Right cardiac atrium (tissue), 5 donors: ENCODE measurements at regions of chr2 and their contacts with region 1.

Region 1: GRCh38 chr2:177332041-177332991 is 60.3 kb upstream of the AGPS start:
- DNase-seq: peak; percentile 50 to 72 (median 71)
- ATAC-seq: peak; percentile 81 to 87
- H3K4me3 ChIP-seq: peak overlapping the region; percentile 14
- H3K27ac ChIP-seq: no peak overlapping the region
- H3K4me1 ChIP-seq: no peaks in the 10 kb centered on the region
- H3K27me3 ChIP-seq: no peaks in the 10 kb centered on the region

Region 2: DNA sequence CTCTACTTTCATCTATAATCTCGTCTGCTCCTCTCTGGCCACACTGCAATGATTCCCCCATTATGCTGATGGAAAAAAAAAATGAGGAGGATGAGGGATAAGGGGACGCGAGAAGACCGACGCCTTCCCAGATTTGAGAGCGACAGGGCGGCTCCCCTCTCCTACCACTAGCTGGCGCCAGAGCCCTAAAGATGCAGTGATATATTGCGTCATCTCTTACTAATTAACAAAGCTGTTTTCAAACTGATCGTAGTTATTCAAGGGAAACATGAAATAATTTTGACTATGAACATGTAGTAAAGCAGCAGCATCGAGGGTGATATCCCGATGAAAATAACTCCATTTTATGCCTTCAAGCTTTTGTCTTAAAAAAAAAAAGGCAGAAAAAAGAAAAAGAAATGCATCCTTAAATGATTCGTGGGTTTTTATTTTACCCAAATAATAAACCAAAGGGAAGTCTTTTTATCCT is 167.7 kb before region 1 on chr2:
- intact Hi-C with region 1: loop called (anchors 2 to 5 kb)
- DNase-seq: peak; percentile 82 to 94 (median 91)
- ATAC-seq: peak; percentile 88 to 92
- H3K4me3 ChIP-seq: peak overlapping the region; percentile 66
- H3K27ac ChIP-seq: no peak overlapping the region
- H3K4me1 ChIP-seq: no peaks in the 10 kb centered on the region
- H3K27me3 ChIP-seq: no peaks in the 10 kb centered on the region

Region 3: DNA sequence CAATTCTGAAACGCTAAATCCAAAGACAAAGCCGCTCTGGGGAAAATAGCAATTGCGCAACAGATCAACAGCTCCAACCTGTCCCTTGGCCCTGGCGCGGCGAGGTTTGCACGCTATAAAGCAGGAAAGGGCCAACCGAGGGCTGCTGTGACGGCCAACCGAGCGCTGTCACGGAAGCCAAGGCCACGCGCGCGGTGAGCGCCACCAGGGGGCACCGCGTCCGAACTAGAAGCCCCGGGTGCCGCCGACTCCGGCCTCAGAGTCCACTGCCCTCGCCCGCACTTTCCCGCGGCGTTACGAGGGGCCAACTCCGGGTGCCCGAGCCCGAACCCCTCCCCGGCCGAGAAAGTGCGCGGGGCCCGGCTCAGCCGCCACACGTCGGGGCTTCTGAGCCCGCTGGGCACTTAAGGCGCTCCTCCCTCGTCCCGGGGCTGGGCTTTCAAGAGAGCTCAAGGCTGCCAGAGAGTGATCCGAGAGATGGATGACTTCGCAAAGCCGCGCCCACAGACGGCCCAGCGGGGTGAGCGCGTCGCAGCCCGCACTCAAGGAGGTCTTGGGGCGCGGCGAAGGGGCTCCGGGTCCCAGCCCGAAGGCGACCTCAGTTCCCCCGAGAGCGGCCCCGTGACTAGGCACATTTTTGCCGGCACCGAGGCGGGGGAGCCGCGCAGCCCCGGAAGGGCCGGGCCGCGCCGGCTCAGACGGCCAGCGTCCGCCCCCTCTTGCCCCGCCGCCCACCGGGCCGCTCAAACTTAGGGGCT is 68.7 kb before region 1 on chr2:
- intact Hi-C with region 1: loop called in 3 of 4 experiments (anchors 5 to 10 kb)
- DNase-seq: peak; percentile 98 to 100 (median 99)
- ATAC-seq: peak; percentile 83 to 85
- H3K4me3 ChIP-seq: peak overlapping the region; percentile 90
- H3K27ac ChIP-seq: peak overlapping the region; percentile 100
- H3K4me1 ChIP-seq: no peaks in the 10 kb centered on the region
- H3K27me3 ChIP-seq: no peaks in the 10 kb centered on the region

Region 4: DNA sequence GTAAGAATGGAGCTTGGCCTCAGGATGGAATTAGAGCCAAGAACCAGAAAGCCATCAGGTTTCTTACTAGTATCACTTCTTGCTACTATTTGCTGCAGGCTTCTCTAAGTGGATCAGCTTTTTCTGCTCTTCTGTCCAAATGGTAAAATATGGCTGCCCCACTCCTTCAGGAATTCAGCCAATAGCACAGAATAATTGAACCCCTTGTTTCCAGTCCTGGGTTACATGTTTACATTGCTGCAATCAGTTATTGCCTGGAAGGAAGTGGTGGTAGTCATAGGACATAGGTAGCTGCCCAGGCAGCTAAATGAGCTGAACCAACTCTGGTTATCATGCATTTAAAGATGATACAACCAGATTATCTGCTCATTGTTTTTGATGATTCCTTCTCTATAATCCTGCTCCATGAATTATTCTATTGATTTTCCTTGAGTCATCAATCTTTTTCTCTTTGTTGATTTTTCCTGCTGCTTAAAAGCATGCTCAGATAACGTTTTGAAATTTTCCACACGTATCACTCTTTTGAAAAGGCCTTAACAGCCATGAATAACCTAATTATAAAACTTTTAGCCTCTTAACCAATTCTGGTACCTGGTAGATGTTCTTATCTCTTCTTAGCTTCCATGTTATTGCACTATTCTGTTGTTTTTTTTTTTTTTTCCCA is 72.8 kb after region 1 on chr2:
- intact Hi-C with region 1: loop called in 1 of 4 experiments (anchors 5 kb)
- DNase-seq: no peak
- ATAC-seq: no peak
- H3K4me3 ChIP-seq: no peak overlapping the region
- H3K27ac ChIP-seq: no peak overlapping the region
- H3K4me1 ChIP-seq: no peaks in the 10 kb centered on the region
- H3K27me3 ChIP-seq: no peaks in the 10 kb centered on the region

Region 5: DNA sequence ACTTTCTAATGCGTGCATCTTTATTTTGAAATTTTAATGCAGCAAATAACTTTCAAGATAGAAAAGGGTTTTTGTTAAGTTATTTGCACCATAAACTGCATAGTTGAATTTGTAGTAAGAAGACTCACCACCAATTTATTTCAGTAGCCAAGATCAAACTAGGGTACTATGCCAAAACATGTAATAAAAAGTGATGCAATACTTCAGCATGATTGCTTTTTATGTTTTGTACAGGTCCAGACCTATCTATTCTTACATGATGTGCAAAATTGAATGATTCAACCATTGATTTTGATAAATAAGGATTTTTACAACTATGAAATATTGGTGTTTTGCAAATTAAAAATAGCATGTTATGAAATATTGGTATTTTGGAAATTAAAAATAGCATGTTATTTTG is 87.0 kb after region 1 on chr2:
- intact Hi-C with region 1: loop called in 2 of 4 experiments (anchors 2 to 5 kb)
- DNase-seq: no peak
- ATAC-seq: no peak
- H3K4me3 ChIP-seq: no peak overlapping the region
- H3K27ac ChIP-seq: no peak overlapping the region
- H3K4me1 ChIP-seq: no peaks in the 10 kb centered on the region
- H3K27me3 ChIP-seq: no peaks in the 10 kb centered on the region

Region 6: DNA sequence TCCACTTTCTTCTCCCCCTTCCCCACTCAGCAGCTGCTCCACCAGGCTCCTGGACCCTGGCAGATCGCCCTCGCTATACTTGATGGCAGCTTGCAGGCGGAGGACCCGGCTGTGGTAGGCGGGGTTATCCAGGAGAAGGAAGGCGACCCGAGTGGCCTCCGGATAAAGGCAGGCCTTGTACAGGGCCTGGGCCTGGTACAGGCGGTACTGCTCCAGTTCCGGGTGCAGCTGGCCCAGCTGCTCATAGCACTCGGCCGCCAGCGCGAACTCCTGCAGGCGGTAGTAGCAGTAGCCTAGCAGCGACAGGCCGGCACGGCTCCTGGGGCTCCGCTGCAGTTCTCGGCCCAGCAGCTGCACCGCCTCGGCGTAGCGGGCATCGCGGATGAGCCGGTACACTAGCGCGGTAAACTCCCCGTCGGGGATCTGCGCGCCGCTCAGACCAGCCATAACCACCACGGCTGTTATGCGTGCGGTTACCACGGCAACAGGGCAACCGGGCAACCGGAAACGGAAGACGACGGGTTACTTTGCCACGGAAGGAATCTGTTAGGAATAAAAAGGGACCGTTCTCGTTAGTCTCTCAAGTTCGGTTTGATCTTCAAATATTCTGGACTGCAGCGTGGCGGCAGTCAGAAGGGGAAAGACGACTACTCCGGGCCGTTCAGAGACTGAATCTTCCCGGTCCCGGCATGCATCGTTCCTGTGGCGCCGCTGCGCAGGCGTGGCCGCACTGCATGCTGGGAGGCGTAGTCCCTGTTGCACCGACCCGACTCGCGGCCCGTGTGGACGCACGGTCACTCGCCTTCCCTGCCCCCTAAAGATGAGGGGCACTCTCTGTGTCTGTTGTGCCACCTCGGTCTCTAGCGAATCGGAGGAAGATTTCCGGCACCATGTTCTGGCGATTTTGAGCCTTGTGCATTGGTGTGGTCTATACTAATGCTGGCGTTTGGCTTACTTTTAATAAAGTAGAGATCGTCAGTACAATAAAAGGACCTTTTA is 286.2 kb after region 1 on chr2:
- intact Hi-C with region 1: loop called in 1 of 4 experiments (anchors 10 kb)
- DNase-seq: peak; percentile 93 to 97 (median 96)
- ATAC-seq: peak; percentile 98 to 99
- H3K4me3 ChIP-seq: peak overlapping the region; percentile 69
- H3K27ac ChIP-seq: peak overlapping the region; percentile 94
- H3K4me1 ChIP-seq: no peaks in the 10 kb centered on the region
- H3K27me3 ChIP-seq: no peaks in the 10 kb centered on the region

Region 7: GRCh38 chr2:177763532-177764265 is 431.4 kb after region 1 on chr2:
- intact Hi-C with region 1: loop called in 3 of 4 experiments (anchors 10 kb)
- DNase-seq: peak; percentile 76 to 85 (median 83)
- ATAC-seq: peak; percentile 86 to 88
- H3K4me3 ChIP-seq: no peak overlapping the region
- H3K27ac ChIP-seq: no peak overlapping the region
- H3K4me1 ChIP-seq: no peaks in the 10 kb centered on the region
- H3K27me3 ChIP-seq: no peaks in the 10 kb centered on the region